ENCODE measurements at regions of chr10 and their contacts with region 1.

Region 1: DNA sequence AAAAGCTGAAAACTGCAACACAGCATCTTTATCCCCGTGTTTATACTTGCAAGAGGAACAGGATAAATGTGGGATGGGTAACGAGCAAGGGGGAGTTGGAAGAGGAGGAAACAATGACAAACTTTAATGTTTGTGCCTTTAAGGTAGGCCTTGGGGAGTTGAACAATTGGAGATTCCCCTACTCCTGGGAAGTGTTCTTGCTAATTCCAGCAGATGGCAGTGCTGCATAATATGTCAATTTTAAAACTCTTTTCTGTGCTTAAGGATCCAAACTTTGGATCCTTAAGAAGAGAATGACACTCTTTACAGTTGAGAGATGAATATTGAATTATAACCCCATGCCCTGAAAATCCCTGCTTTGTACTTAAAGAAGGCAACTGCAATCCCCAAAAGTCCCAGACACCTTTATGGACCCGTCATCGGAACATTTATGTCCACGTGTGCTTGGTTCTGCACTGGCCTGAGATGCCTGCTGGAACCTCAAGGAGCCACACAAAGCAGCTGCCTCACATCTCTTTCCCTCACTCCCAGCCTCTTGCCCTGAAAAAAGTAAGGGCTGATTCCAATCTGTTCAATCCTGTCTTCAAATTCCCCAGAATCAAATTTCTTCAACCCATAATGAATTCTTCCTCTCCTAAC is 12.0 kb downstream of the IFIT5 start:
- DNase-seq: peak in 1 of 6 donors; percentile 36
- ATAC-seq: peak; percentile 73 to 92 (median 89)
- H3K4me3 ChIP-seq: no peak overlapping the region
- H3K27ac ChIP-seq: no peak overlapping the region
- H3K4me1 ChIP-seq: peaks cover 0 to 3% (median 0%) of the 10 kb centered on the region in 3 donors
- H3K27me3 ChIP-seq: no peaks in the 10 kb centered on the region
- CTCF ChIP-seq: peak; percentile 49 to 71 (median 63)

Region 2: DNA sequence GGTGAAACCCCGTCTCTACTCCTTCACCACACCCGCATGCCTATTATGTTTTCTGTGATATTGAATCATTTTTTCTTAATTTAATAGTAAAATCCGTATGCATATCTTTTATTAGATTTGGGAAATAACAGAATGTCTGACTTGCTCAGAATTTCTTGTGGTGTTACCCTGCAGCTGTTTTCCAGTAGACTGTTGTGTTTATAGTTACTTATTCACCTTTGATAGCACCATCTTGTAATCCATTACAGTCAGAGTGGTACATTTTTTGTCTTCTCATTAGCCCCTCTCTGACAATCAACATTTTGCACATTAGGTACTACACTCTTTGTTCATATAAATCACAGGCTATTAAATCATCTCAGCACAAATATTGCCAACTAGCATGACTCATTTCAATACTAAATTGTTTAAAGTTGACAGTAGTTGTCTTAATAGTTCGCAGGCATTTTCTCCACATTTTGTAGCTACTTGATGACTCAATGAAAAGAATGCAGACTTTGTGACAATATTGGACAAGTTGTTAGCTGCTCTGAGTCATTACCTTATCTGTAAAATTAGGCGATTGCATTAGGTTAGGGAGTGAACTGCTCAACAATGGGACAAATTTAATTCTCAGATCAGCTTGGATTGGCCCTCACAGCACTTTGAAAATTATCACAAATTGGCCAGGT is 126.8 kb after region 1 on chr10:
- intact Hi-C with region 1: loop called in 1 of 3 experiments (anchors 5 kb)
- DNase-seq: no peak
- ATAC-seq: peak; percentile 68 to 83 (median 76)
- H3K4me3 ChIP-seq: no peak overlapping the region
- H3K27ac ChIP-seq: peak overlapping the region in 2 of 4 donors; percentile 37 to 73
- H3K4me1 ChIP-seq: peaks cover 9 to 18% (median 10%) of the 10 kb centered on the region in 3 donors
- H3K27me3 ChIP-seq: no peaks in the 10 kb centered on the region
- CTCF ChIP-seq: no peak

Region 3: DNA sequence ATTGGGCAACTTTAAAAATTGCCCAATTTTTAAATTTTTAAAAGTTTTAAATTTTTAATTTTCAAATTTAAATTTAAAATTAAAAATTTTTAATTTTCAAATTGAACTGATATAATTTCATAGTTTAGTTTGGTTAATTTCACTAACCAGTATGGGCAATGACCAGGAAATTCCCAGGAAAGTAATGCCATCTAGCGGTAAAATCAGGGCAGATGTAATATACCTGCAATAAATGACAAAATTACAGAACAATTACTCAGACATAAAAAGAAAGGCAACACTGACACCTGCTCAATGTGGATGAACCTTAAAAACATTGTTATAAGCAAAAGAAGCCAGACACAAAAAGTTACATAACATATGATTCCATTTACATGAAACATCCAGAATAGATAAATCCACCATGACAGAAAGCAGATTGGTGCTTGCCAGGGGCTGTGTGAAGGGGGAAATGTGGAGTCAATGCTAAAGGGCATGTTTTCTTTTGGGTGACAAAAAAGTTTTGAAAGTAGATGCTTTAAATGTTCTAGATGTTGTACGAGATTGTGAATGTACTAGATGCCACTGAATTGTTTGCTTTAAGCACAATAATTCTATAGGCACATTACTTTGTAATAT is 137.6 kb after region 1 on chr10:
- intact Hi-C with region 1: loop called (anchors 5 to 10 kb)
- DNase-seq: no peak
- ATAC-seq: peak; percentile 80 to 92 (median 88)
- H3K4me3 ChIP-seq: no peak overlapping the region
- H3K27ac ChIP-seq: no peak overlapping the region
- H3K4me1 ChIP-seq: no peaks in the 10 kb centered on the region
- H3K27me3 ChIP-seq: no peaks in the 10 kb centered on the region
- CTCF ChIP-seq: peak; percentile 28 to 53 (median 42)